H1 (cell line): ENCODE measurements at regions of chr7 and their contacts with region 1.

Region 1: DNA sequence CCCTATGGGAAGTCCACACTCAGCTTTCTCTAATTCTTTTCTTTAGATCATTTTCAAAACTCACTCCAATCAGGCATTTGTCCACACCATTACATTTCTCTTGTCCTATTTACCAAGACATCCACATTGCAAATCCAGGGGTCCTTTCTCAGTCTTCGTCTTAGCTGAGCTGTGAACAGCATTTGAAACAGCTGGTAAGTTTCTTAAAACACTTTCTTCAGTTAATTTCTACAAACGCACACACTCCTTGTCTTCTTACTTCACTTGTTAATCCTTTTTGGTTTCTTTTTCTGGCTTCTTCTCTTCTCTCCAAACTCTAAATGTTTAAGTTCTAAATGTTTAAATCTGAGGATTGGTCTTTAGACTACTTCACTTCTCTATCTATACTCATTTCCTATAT is 769.3 kb downstream of the PHTF2 start:
- DNase-seq: no peak
- H3K4me3 ChIP-seq: no peak overlapping the region
- H3K27ac ChIP-seq: no peak overlapping the region
- H3K4me1 ChIP-seq: peaks cover 0 to 13% (median 8%) of the 10 kb centered on the region in 4 experiments; a peak in 4 of 7 replicates
- H3K27me3 ChIP-seq: no peaks in the 10 kb centered on the region
- CTCF ChIP-seq: no peak
- EP300 ChIP-seq: no peak
- POLR2A ChIP-seq: no peak
- RAD21 ChIP-seq: no peak

Region 2: DNA sequence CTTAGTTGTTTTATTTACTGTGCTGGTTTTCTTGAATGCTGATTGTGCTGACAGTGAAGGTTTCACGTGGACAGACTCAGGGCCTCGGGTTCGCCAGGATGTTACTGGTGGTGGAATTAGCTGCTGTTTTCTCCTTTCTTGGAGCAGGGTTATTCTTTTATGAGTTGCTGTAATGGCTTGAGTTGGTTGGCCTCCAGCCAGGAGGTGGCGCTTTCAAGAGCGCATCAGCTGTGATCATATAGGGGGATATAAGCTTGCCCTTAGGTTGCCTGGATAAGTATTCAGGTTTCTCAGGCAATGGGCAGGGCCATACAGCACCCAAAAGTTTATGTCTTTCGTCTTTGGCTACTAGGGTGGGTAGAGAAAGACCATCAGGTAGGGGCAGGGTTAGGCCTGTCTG is 28.0 kb before region 1 on chr7:
- CTCF ChIA-PET with region 1: no interaction called
- POLR2A ChIA-PET with region 1: no interaction called
- DNase-seq: no peak
- H3K4me3 ChIP-seq: no peak overlapping the region
- H3K27ac ChIP-seq: no peak overlapping the region
- H3K4me1 ChIP-seq: peaks cover 0 to 3% (median 0%) of the 10 kb centered on the region in 4 experiments; a peak in 1 of 7 replicates
- H3K27me3 ChIP-seq: no peaks in the 10 kb centered on the region
- CTCF ChIP-seq: peak in 1 of 3 experiments; percentile 26; a peak in 2 of 4 replicates
- EP300 ChIP-seq: no peak
- POLR2A ChIP-seq: no peak
- RAD21 ChIP-seq: peak in 1 of 2 experiments; percentile 21; a peak in 1 of 4 replicates

Region 3: GRCh38 chr7:78578686-78579085 is 10.8 kb after region 1 on chr7:
- CTCF ChIA-PET with region 1: interaction called, 3 read pairs
- POLR2A ChIA-PET with region 1: interaction called, 16 read pairs
- DNase-seq: peak in 1 of 2 experiments; percentile 63
- H3K4me3 ChIP-seq: no peak overlapping the region
- H3K27ac ChIP-seq: peak overlapping the region; percentile 44; the same call in 1 of the 2 replicates
- H3K4me1 ChIP-seq: peaks cover 2 to 16% (median 8%) of the 10 kb centered on the region in 4 experiments; a peak in 4 of 7 replicates
- H3K27me3 ChIP-seq: no peaks in the 10 kb centered on the region
- CTCF ChIP-seq: no peak
- EP300 ChIP-seq: 0 out of 3 replicates have a peak, but pooled peaks of 1 of the 2 experiments have one; percentile 16
- POLR2A ChIP-seq: no peak
- RAD21 ChIP-seq: no peak

Region 4: DNA sequence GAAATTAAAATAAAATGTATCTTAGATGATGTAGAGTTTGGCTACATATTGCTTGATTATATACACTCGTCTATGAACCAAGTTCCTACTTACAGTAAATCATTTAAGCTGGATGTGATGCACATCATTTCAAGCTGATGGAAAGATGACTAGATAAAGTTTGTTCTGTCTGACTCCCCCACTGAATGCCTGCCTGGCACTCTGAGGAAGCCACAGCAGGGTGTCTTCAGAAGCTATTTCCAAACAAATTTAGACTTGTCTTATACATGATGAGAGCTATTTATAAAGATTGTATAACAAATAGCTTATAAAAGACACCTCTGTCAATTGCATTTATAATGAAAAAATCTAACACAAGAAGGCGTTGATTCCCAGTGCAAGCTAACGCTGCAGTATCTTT is 144.3 kb after region 1 on chr7:
- CTCF ChIA-PET with region 1: no interaction called
- POLR2A ChIA-PET with region 1: no interaction called
- DNase-seq: no peak
- H3K4me3 ChIP-seq: no peak overlapping the region
- H3K27ac ChIP-seq: no peak overlapping the region
- H3K4me1 ChIP-seq: peaks cover 0 to 11% (median 8%) of the 10 kb centered on the region in 4 experiments; a peak in 4 of 7 replicates
- H3K27me3 ChIP-seq: no peaks in the 10 kb centered on the region
- CTCF ChIP-seq: no peak
- EP300 ChIP-seq: no peak
- POLR2A ChIP-seq: no peak
- RAD21 ChIP-seq: no peak